KBM-7 (cell line): ENCODE measurements at regions of chr17 and their contacts with region 1.

Region 1: DNA sequence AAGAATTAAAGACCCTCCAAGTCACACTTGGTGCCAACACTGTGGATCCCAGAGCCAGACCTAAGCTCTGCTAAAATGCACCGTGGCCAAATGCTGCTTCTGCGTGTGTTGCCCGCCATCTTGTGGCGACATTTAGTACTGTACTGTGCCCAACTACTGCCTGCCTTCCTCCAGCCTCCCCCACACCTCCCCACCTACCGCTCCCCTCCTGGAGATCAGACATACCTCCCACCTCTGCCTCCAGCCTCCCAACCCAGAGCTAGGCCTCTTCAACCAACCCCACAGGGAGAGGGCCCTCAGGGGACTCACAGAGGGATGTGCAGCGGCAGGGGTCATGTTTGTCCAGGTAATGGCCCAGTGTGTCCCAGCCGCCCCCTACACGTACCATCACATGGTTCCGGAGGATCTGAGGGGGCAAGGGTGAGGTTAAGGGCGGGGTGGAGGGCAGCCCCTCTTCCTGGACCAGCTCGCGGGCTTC is 5.5 kb downstream of the GAS2L2 start:
- DNase-seq: peak; percentile 90

Region 2: DNA sequence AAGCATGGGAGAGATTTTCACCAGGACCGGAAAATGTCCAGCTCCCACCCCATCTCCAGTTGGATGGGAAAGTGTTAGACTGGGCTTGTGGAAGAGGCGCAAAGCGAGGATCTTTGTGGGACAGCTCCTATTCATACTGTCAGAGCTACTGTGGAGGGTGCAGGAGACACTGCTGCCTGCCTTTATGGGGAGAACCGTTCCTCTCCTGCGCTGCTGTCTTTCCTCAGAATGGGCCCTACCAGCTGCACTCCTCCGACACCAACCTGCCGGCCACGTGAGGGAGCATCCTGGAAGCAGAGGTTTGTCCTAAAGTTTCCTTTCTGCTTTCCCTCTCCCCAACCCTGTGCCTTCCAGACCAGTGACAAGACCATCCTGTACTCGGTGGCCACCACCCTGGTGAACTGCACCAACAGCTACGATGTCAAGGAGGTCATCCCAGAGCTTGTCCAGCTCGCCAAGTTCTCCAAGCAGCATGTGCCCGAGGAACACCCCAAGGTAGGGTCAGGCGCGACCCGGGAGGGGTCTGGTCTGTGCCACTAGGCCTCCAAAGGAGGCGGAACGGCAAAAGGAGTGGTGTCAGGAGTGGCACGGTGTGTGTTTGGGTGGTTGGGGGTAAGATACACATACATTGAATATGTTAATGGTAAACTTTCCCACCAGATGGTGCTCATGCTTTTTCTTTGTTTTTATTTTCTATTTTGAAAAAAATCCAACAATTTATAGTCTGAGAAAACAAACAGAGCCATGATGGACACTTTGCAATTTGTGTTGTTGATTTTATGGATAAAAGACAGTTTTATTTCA is 576.4 kb before region 1 on chr17:
- in situ Hi-C with region 1: loop called (anchors 25 kb)
- DNase-seq: peak; percentile 58

Region 3: DNA sequence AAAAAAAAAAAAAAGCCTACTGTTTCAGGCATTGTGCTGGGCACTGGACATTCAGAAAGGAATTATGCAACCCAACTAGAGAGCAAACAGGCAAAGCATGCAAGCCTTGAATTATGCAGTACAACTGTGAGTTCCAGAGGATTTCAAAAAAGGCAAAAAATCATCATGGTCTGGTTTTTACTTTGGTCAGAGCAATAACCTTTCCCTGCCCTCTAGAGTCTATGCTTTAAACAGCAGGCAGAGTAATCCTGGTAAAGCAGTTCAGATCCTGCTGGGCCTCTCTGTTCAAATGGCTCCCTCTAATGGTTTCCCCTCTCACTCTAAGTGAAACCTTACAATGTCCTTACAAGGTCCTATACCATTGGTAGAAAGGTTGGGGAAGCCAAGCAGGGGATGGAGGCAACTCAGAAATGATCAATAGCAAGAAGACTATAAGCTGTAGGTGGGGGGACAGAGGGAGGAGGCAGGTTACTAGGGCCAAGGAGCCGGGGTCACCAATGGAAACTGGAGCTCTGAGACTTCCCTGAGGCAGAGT is 57.1 kb after region 1 on chr17:
- in situ Hi-C with region 1: no loop called
- DNase-seq: peak; percentile 92

Region 4: GRCh38 chr17:35947156-35947585 is 199.6 kb after region 1 on chr17:
- in situ Hi-C with region 1: no loop called
- DNase-seq: peak; percentile 84

Region 5: GRCh38 chr17:36030956-36031355 is 283.4 kb after region 1 on chr17:
- in situ Hi-C with region 1: no loop called
- DNase-seq: no peak

Region 6: GRCh38 chr17:36591434-36592315 is 844.1 kb after region 1 on chr17 and contains the start of gene DHRS11:
- in situ Hi-C with region 1: no loop called
- DNase-seq: peak; percentile 63